Activated CD4-positive, alpha-beta memory T cell treated with anti-CD3 and anti-CD28 coated beads for 36 hours (primary cell): ENCODE measurements at regions of chr7 and their contacts with region 1.

Region 1: GRCh38 chr7:103296901-103297836 is at the start of gene PMPCB:
- DNase-seq: peak; percentile 98
- H3K4me3 Mint-ChIP-seq: peak within 1 kb of the TSS; percentile 80
- H3K27ac Mint-ChIP-seq: peak within 1 kb of the TSS; percentile 75
- H3K4me1 Mint-ChIP-seq: peaks cover 35% of the 10 kb centered on the region
- H3K27me3 Mint-ChIP-seq: no peaks in the 10 kb centered on the region
- total RNA-seq, gene PMPCB: 81.9 to 85.0 TPM

Region 2: DNA sequence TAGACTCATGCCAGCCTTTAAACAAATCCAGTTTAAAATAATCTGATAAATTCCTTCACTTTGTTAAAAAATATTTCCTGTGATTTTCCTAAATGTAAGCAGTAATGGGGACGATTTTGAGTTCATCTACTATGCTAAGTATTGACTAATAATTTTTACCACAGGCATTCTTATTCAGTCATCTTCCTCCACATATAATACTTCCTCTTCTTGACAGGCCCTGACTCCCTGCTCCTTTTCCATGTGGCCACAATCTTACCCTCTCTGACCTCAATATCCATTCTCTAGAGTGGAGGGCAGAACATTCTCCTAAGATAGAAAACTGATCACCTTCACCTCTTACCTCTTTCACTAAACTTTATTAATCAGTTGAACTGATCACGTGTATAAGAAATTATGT is 39.6 kb after region 1 on chr7:
- CTCF ChIA-PET with region 1: no interaction called
- POLR2A ChIA-PET with region 1: no interaction called
- intact Hi-C with region 1: no loop called
- DNase-seq: no peak
- H3K4me3 Mint-ChIP-seq: no peak overlapping the region
- H3K27ac Mint-ChIP-seq: no peak overlapping the region
- H3K4me1 Mint-ChIP-seq: peaks cover 32% of the 10 kb centered on the region
- H3K27me3 Mint-ChIP-seq: no peaks in the 10 kb centered on the region

Region 3: GRCh38 chr7:103413407-103413806 is 116.2 kb after region 1 on chr7:
- CTCF ChIA-PET with region 1: interaction called, 12 read pairs
- POLR2A ChIA-PET with region 1: no interaction called
- intact Hi-C with region 1: no loop called
- DNase-seq: no peak
- H3K4me3 Mint-ChIP-seq: no peak overlapping the region
- H3K27ac Mint-ChIP-seq: no peak overlapping the region
- H3K4me1 Mint-ChIP-seq: no peaks in the 10 kb centered on the region
- H3K27me3 Mint-ChIP-seq: peaks cover 5% of the 10 kb centered on the region